ENCODE measurements at regions of chr15 and their contacts with region 1.

Region 1: GRCh38 chr15:41648770-41649169 is 11.4 kb upstream of the MGA start:
- DNase-seq: no peak
- ATAC-seq: no peak
- H3K4me3 ChIP-seq: no peak overlapping the region
- H3K4me3 Mint-ChIP-seq: no peak overlapping the region
- H3K27ac ChIP-seq: no peak overlapping the region
- H3K27ac Mint-ChIP-seq: no peak overlapping the region
- H3K4me1 ChIP-seq: no peaks in the 10 kb centered on the region
- H3K4me1 Mint-ChIP-seq: peaks cover 0 to 1% (median 0%) of the 10 kb centered on the region in 3 donors
- H3K27me3 ChIP-seq: no peaks in the 10 kb centered on the region
- H3K27me3 Mint-ChIP-seq: no peaks in the 10 kb centered on the region

Region 2: GRCh38 chr15:40338041-40338657 is 1310.6 kb before region 1 on chr15:
- CTCF ChIA-PET with region 1: no interaction called
- POLR2A ChIA-PET with region 1: no interaction called
- DNase-seq: peak; percentile 44 to 87 (median 70)
- ATAC-seq: peak; percentile 80 to 89 (median 86)
- H3K4me3 ChIP-seq: no peak overlapping the region
- H3K4me3 Mint-ChIP-seq: no peak overlapping the region
- H3K27ac ChIP-seq: no peak overlapping the region
- H3K27ac Mint-ChIP-seq: no peak overlapping the region
- H3K4me1 ChIP-seq: peaks cover 11 to 33% of the 10 kb centered on the region in 2 experiments
- H3K4me1 Mint-ChIP-seq: peaks cover 17 to 22% (median 20%) of the 10 kb centered on the region in 3 donors
- H3K27me3 ChIP-seq: peaks cover 0 to 17% of the 10 kb centered on the region in 2 experiments
- H3K27me3 Mint-ChIP-seq: no peaks in the 10 kb centered on the region

Region 3: GRCh38 chr15:40684381-40684780 is 964.4 kb before region 1 on chr15:
- CTCF ChIA-PET with region 1: interaction called in 1 of 2 experiments, 11 read pairs
- POLR2A ChIA-PET with region 1: no interaction called
- DNase-seq: no peak
- ATAC-seq: no peak
- H3K4me3 ChIP-seq: no peak overlapping the region
- H3K4me3 Mint-ChIP-seq: no peak overlapping the region
- H3K27ac ChIP-seq: no peak overlapping the region
- H3K27ac Mint-ChIP-seq: no peak overlapping the region
- H3K4me1 ChIP-seq: peaks cover 0 to under 1% of the 10 kb centered on the region in 2 experiments
- H3K4me1 Mint-ChIP-seq: peaks cover 0 to 4% (median 0%) of the 10 kb centered on the region in 3 donors
- H3K27me3 ChIP-seq: no peaks in the 10 kb centered on the region
- H3K27me3 Mint-ChIP-seq: no peaks in the 10 kb centered on the region